Left lung (tissue), 14 donors: ENCODE measurements at regions of chr1 and their contacts with region 1.

Region 1: DNA sequence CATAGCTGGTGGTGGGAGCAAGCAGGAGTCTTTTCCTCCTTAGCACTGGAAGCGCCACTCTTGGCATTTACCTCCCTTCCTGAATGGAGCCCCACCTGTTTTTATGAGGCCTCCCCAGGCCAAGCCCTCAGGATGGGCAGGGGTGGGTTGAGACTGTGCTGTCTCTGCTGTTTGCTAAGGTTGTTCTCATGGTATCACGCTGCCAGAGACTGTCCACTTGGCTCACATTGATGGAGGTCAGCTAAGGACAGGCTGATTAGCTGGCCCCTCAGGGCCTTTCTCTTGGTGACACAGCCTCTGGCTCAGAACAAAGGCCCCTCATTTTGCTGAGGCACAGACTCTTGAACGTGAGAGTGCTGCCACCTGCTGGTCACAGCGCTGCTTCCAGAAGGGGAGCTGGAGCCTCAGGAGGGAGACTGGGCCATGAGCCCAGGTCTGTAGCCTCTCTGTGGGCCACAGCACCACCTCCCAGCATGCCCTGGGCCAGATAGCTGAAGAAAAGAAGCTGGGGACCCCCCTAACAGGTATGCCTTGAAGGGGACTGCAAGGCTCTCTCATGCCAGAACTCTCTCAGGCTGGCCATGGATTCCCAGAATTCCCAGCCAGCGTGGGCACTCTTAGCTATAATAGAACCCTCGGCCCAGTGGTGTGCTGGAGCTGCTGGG is 85.6 kb downstream of the CD58 start:
- DNase-seq: peak; percentile 76 to 95 (median 88)
- ATAC-seq: peak; percentile 89
- H3K4me3 ChIP-seq: no peak overlapping the region
- H3K27ac ChIP-seq: no peak overlapping the region
- H3K4me1 ChIP-seq: peaks cover 7 to 17% of the 10 kb centered on the region in 2 donors
- H3K27me3 ChIP-seq: no peaks in the 10 kb centered on the region
- CTCF ChIP-seq: peak; percentile 87 to 96

Region 2: GRCh38 chr1:116151739-116152576 is 333.2 kb before region 1 on chr1:
- intact Hi-C with region 1: loop called in 1 of 2 experiments (anchors 5 kb)
- DNase-seq: peak; percentile 68 to 93 (median 80)
- ATAC-seq: peak; percentile 99
- H3K4me3 ChIP-seq: peak overlapping the region; percentile 28 to 33
- H3K27ac ChIP-seq: peak overlapping the region; percentile 64 to 65
- H3K4me1 ChIP-seq: peaks cover 8 to 13% of the 10 kb centered on the region in 2 donors
- H3K27me3 ChIP-seq: no peaks in the 10 kb centered on the region
- CTCF ChIP-seq: peak; percentile 91 to 93

Region 3: DNA sequence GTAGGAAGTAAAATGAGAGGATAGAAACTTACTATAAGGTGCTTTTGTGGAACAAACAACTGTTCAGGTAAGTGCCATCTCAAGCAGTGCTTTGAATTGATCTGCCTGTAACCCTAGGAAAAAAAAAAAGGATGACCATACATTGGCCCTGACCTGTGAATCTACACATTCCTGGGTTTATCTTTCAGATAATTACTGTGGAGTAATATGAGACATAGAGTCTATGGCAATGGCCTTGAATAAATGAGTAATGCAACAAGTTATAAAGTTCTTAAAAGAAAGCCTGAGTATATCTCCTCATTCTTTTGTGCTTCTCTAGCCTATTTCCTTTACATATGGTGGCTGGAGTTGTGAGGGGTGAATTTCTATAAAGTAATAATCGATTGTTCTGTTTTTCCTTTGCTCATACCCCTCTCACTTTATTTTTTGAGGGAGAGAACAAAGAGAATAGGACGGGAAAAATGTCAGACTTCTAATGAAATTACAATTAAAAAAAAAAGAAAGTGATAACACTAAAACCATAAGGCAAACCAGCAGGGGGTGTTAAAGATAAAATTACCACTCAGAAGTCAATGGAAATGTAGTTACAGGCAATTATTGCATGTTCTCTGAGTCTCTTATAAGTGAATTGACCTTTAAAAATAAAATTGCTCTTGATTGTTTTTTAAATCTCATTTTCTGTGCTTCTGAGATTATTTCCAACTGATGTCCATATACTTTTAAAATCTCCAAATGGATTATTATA is 124.6 kb before region 1 on chr1:
- intact Hi-C with region 1: loop called in 1 of 2 experiments (anchors 5 kb)
- DNase-seq: no peak
- ATAC-seq: peak; percentile 57
- H3K4me3 ChIP-seq: no peak overlapping the region
- H3K27ac ChIP-seq: no peak overlapping the region
- H3K4me1 ChIP-seq: no peaks in the 10 kb centered on the region
- H3K27me3 ChIP-seq: no peaks in the 10 kb centered on the region
- CTCF ChIP-seq: peak in 1 of 2 donors; percentile 21

Region 4: DNA sequence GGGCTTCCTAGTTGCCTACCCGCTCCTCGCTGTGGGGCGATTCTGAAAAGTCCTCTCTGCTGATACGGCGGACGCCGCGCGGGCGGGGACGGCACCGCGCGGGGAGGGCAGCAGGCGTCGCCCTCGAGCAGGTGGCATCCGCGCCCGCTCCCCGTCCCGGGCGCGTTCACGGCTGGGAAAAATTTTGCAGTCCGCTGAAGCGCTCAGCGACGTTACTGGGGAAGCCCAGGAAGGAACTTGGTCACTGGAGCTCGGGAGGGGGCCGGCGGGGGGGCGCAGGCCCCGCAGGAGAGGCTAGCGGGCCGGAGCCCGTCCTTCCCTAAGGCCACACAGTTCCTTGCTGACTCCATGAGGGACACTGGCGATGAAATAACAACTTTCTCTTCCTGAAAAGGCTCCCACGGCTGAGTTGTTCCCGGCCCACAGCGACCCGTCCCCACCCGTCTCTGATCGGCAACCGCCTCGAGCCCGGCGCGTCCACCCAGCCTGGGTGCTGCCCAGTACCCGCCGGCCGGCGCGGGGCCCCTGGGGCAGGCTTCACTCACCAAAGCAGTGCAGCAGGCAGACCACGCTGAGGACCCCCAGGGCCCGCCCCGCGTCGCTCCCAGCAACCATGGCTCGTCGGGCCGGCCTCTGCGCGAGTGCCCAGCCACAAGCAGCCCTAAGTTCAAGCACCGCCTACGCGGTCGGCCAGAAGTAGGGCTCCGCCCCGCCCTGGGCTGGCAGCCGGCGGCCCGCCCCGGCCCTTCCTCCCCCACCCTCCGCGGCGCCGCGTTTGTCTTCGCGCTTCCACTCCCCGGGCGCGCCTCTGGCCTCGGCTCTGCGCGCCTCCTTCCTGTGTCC is 85.4 kb after region 1 on chr1 and contains the start of gene CD58:
- intact Hi-C with region 1: no loop called
- DNase-seq: peak; percentile 67 to 99 (median 92)
- ATAC-seq: peak; percentile 94
- H3K4me3 ChIP-seq: peak within 1 kb of the TSS; percentile 86
- H3K27ac ChIP-seq: peak within 1 kb of the TSS; percentile 97 to 100
- H3K4me1 ChIP-seq: peaks cover 0 to 69% of the 10 kb centered on the region in 2 donors
- H3K27me3 ChIP-seq: no peaks in the 10 kb centered on the region
- CTCF ChIP-seq: peak; percentile 48 to 81
- polyA plus RNA-seq, gene CD58: 10.1 to 14.0 (median 13.2) TPM